ENCODE measurements at regions of chr6 and their contacts with region 1.

Region 1: DNA sequence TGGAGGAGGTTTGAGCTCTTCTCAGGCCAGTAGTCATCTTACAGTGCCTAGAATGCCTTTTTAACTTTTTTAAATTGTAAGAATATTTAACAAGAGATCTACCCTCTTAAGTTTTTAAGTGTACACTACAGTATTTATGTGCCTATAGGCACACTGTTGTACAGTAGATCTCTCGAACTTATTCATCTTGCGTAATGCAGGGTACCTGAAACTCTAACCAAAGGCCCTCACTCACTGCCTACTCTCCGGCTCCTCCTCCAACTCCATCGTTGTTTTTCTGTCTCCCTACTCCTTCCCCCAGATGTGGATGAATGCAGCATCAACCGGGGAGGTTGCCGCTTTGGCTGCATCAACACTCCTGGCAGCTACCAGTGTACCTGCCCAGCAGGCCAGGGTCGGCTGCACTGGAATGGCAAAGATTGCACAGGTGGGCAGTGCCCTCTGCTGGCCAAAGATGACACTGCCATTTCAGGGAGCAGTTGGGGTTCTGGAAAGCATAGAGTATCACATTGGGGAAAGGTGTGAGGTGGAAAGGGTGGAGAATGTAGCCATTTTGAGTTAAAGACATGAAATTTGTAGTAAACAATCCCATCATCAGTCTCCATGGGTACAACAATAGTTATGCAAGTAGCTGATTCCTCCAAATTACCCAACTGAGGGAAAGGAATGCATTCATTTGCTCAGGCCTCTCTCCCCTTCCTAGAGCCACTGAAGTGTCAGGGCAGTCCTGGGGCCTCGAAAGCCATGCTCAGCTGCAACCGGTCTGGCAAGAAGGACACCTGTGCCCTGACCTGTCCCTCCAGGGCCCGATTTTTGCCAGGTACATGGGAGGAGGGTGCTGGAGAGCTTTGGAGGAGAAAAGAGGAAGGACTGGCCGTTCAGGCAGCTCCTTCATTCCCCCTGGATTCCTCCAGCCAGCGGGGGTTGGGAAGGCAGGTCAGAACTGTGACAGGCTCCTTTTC is 18.4 kb upstream of the ZNF76 start:
- DNase-seq: peak; percentile 64 to 97
- H3K4me3 ChIP-seq: no peak overlapping the region
- H3K27ac ChIP-seq: no peak overlapping the region
- H3K4me1 ChIP-seq: peaks cover 11 to 40% (median 21%) of the 10 kb centered on the region in 4 experiments
- H3K27me3 ChIP-seq: peaks cover 2 to 28% (median 22%) of the 10 kb centered on the region in 4 experiments
- CTCF ChIP-seq: peak; percentile 93 to 97 (median 95)
- EP300 ChIP-seq: no peak
- POLR2A ChIP-seq: no peak
- RAD21 ChIP-seq: peak; percentile 99

Region 2: DNA sequence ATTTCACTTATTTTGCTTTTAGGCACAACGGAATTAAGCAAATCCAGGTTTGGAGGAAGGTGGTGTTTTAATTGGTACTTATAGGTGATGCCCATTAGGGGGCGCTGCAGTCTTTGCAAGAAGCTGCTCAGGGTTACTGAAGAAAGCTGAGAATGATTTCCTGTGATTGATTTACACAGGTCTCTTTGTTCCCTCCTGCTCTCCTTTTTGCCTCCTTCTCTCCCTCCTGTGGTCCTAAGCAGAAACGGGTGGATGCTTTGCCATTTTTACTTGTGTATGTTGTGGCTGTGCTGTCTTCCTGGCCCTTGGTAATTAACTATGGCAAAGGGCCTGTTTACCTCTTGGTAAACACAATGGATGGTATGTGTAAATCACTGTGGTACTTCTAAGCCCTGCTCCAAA is 254.3 kb before region 1 on chr6:
- CTCF ChIA-PET with region 1: interaction called, 10 read pairs
- POLR2A ChIA-PET with region 1: interaction called, 3 read pairs
- DNase-seq: peak; percentile 25 to 77
- H3K4me3 ChIP-seq: no peak overlapping the region
- H3K27ac ChIP-seq: 0 out of 2 replicates have a peak overlapping the region, but pooled peaks have one; percentile 13
- H3K4me1 ChIP-seq: peaks cover 0 to 6% (median 2%) of the 10 kb centered on the region in 4 experiments; a peak in 4 of 7 replicates
- H3K27me3 ChIP-seq: no peaks in the 10 kb centered on the region
- CTCF ChIP-seq: peak in 2 of 3 experiments; percentile 86; a peak in 3 of 4 replicates
- EP300 ChIP-seq: no peak
- POLR2A ChIP-seq: no peak
- RAD21 ChIP-seq: peak; percentile 94 to 96

Region 3: DNA sequence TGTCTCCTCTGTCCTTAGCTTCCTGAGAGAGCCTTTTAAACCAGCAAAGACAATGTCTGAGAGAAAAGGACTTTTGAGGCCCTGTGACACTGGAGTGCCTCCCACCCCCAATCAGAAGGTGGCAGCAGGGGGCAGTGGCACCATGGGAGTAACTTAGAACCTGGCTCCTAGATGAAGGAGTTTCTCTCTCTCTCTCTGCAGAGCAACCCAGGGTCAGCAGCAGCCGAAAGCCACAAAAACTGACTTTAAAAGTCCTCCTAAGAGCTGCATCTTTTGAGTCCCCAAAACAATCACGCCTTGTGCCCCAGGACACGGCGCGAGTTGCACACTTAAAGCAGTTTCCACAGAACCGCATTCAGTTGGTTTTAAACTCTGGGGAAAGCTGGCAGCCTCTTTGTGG is 94.7 kb before region 1 on chr6:
- CTCF ChIA-PET with region 1: interaction called, 118 read pairs
- POLR2A ChIA-PET with region 1: interaction called, 3 read pairs
- DNase-seq: peak in 1 of 2 experiments; percentile 54
- H3K4me3 ChIP-seq: no peak overlapping the region
- H3K27ac ChIP-seq: no peak overlapping the region
- H3K4me1 ChIP-seq: peaks cover 0 to 10% (median 7%) of the 10 kb centered on the region in 4 experiments; a peak in 5 of 7 replicates
- H3K27me3 ChIP-seq: peaks cover 0 to 19% (median 13%) of the 10 kb centered on the region in 4 experiments; a peak in 6 of 7 replicates
- CTCF ChIP-seq: peak; percentile 55 to 63 (median 61)
- EP300 ChIP-seq: no peak
- POLR2A ChIP-seq: no peak
- RAD21 ChIP-seq: peak; percentile 73 to 85

Region 4: DNA sequence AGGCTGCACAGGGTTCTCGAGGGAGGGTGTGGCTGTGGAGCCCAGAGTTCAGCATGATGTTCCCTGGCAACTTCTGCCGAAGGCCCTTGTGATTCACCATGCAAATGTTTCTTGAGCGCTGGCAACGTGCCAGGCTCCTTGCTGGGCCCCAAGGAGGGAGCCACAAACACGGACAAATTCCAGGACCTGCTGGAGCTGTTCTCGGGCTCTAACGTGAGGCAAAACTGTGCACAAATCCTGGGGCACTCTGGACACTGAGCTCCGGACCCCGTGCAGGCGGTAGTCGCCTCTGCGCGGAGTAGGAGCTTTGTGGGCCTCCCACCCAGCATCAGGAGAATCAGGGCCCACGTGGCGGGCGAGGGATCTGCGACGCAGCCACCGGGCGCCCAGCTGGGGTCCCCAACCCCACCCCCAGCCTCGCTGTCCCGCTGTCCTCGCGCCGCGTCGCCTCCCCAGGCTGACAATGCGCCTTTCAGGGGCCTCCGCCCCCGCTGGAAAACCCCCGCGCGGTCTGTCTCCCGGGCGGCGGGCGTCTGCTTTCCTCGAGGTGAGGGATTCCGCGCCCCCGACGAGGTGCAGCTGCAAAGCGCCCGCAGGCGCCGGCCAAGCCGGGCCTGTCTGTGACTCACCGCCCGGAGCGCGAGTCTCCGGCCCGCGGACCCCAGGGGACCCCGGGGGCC is 59.0 kb before region 1 on chr6:
- CTCF ChIA-PET with region 1: interaction called, 13 read pairs
- POLR2A ChIA-PET with region 1: interaction called, 4 read pairs
- DNase-seq: peak in 1 of 2 experiments; percentile 64
- H3K4me3 ChIP-seq: peak overlapping the region in 1 of 4 experiments; percentile 46; a peak in 3 of 8 replicates
- H3K27ac ChIP-seq: no peak overlapping the region
- H3K4me1 ChIP-seq: peaks cover 0 to 5% (median 4%) of the 10 kb centered on the region in 4 experiments; a peak in 5 of 7 replicates
- H3K27me3 ChIP-seq: peaks cover 0 to 14% (median 4%) of the 10 kb centered on the region in 4 experiments; a peak in 4 of 7 replicates
- CTCF ChIP-seq: no peak
- EP300 ChIP-seq: no peak
- POLR2A ChIP-seq: no peak
- RAD21 ChIP-seq: no peak

Region 5: GRCh38 chr6:35213824-35214756 is 27.0 kb before region 1 on chr6 and contains the start of gene SCUBE3:
- CTCF ChIA-PET with region 1: interaction called, 143 read pairs
- POLR2A ChIA-PET with region 1: interaction called, 9 read pairs
- DNase-seq: peak in 1 of 2 experiments; percentile 81
- H3K4me3 ChIP-seq: peak within 1 kb of the TSS; percentile 45 to 74 (median 60)
- H3K27ac ChIP-seq: no peak within 1 kb of the TSS
- H3K4me1 ChIP-seq: peaks cover 7 to 37% (median 29%) of the 10 kb centered on the region in 4 experiments
- H3K27me3 ChIP-seq: peaks cover 25 to 77% (median 64%) of the 10 kb centered on the region in 4 experiments
- CTCF ChIP-seq: no peak
- EP300 ChIP-seq: no peak
- POLR2A ChIP-seq: no peak
- RAD21 ChIP-seq: no peak
- total RNA-seq, gene SCUBE3: 1.0 TPM in 2 replicates

Region 6: DNA sequence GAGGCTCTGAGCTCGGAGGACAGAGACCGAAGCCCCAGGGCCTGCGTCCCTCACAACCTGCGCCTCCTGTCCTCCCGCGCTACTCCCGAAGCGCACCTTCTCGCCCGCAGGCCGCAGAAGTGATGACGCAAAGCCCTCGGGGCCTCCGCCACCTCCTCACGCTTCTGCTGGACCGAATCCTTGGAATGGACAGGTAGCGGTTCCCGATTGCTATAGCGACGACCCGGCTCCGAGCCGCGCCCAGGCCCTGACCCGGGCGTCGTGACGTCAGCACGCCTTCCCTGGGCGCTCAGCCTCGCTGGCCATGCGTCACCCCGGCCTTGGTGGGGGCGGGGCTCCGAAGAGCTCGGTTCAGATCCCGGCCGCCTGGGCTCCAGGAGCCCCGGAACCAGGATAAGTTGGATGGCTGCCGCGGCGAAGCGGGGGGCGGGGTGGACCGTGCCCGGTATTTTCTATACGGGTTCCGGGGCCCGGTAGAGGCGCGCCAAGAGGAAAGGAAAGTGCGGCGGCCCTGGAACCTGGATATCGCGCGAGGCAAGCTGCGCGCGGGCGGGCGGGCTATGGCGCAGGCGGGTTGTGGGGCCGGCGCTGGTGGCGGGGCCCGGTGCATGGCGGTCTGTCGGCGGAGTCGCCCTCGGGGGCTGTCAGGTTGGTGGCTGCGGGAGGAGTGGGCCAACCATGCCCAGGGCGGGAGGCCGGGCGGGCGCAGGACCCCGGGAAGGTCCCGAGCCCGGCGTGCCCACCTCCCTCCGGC is 18.2 kb after region 1 on chr6 and contains the start of gene ZNF76:
- CTCF ChIA-PET with region 1: interaction called, 18 read pairs
- POLR2A ChIA-PET with region 1: interaction called, 9 read pairs
- DNase-seq: peak; percentile 94 to 100
- H3K4me3 ChIP-seq: peak within 1 kb of the TSS; percentile 61 to 89 (median 80)
- H3K27ac ChIP-seq: peak within 1 kb of the TSS; percentile 92
- H3K4me1 ChIP-seq: peaks cover 0 to 10% (median 0%) of the 10 kb centered on the region in 4 experiments; a peak in 4 of 7 replicates
- H3K27me3 ChIP-seq: no peaks in the 10 kb centered on the region
- CTCF ChIP-seq: no peak
- EP300 ChIP-seq: peak in 1 of 2 experiments; percentile 91; a peak in 2 of 3 replicates
- POLR2A ChIP-seq: peak in 1 of 2 experiments; percentile 96; a peak in 2 of 3 replicates
- RAD21 ChIP-seq: no peak
- total RNA-seq, gene ZNF76: 17.9 and 18.3 TPM in 2 replicates

Region 7: GRCh38 chr6:35275744-35276260 is 34.7 kb after region 1 on chr6:
- CTCF ChIA-PET with region 1: no interaction called
- POLR2A ChIA-PET with region 1: no interaction called
- DNase-seq: no peak
- H3K4me3 ChIP-seq: no peak overlapping the region
- H3K27ac ChIP-seq: no peak overlapping the region
- H3K4me1 ChIP-seq: no peaks in the 10 kb centered on the region
- H3K27me3 ChIP-seq: no peaks in the 10 kb centered on the region; a peak in 1 of 7 replicates
- CTCF ChIP-seq: no peak
- EP300 ChIP-seq: no peak
- POLR2A ChIP-seq: no peak
- RAD21 ChIP-seq: no peak

Measured in H1 (cell line).